HEK293T (cell line): ENCODE measurements at regions of chr3 and their contacts with region 1.

Region 1: DNA sequence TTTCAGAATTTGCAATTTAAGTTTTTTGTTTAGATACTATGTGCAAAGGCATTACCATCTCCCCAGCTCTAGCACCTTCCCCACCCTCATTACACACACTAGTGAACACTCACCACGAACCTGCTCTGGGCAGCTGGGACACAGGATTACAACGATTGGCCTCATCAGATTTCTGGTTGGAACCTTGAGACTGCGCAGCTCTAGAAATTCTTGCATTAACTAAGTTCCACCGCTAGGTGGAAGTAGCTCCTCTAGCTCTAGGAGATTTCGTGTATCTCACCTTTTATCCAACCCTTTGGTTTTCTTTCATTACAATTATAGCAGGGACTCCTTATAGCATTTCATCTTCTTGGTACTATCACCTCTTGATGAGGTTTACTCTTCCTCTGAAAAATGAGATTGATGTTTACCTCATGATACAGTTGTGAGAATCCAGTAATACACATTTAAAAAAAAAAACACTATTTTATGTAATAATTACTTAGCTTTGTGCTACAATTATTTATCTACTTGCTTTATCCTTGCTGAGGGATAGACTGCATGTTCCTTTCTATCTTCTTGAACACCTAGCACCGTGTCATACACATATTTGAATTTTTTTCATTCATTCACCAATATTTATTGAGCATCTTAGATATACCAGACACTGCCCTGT is 28.7 kb upstream of the PLOD2 start:
- DNase-seq: peak; percentile 64

Region 2: GRCh38 chr3:146065573-146066006 is 124.1 kb before region 1 on chr3:
- CTCF ChIA-PET with region 1: interaction called, 46 read pairs
- POLR2A ChIA-PET with region 1: interaction called, 4 read pairs
- DNase-seq: no peak

Region 3: GRCh38 chr3:146148468-146148931 is 41.1 kb before region 1 on chr3:
- CTCF ChIA-PET with region 1: no interaction called
- POLR2A ChIA-PET with region 1: no interaction called
- DNase-seq: no peak

Region 4: DNA sequence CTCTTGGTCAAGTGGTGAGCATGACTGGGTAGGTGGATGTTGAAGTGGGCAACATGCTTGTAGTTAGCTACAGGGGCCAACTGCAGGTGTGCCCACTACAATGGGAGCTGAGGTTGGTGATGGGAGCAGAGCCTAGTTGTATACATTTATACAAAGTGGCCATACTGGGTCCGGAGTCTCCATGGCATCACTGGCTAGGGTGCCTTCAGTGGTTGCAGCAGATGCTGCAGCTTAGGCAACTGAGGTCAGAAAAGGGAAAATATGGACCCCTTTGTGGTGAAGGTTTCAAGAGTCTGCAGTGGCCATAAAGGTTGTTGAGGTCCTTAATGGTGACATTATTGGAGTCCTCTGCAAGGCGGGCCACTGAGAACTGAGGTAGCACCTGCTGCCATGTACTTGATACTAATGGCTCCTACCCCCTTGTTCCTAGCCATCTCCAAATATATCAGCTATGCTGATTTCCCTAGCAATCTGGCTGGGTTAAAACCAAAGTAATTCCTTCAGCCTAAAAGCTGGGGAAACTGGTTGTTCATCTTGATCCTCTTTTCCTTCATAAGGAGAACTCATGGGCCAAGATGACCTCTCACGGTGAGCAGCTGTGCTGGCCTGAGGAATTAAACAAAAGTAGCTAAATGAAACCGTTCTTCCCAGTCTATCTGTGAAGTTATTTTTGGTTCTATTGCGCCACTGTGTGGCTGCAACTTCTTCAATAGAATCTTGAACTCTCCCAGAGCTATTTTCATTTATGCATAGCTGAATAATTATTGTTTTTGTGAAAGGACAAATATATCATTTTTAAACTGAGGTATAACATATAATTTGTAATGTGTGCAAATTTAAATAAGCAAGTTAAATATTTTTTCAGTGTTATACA is 137.3 kb after region 1 on chr3:
- CTCF ChIA-PET with region 1: interaction called, 29 read pairs
- POLR2A ChIA-PET with region 1: interaction called, 3 read pairs
- DNase-seq: peak; percentile 42

Region 5: DNA sequence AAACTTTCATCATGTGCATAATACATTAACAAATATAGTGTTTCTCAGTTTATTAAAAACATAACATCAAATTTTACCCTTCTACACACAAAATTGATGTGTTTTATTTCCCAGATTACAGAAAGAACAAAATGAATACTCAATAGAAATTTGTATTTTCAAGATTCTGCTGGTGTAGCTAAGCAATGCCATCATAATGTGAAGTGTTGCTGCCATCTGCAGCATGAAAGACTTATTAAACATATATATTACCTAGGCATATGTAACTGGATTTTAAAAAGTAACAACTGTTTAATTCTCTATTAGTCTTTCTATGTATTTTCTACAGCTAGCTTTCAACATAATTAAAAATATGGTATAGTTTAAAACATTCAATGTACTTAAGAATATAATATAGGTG is 388.0 kb after region 1 on chr3:
- CTCF ChIA-PET with region 1: interaction called, 15 read pairs
- POLR2A ChIA-PET with region 1: no interaction called
- DNase-seq: no peak